Activated CD8-positive, alpha-beta memory T cell treated with anti-CD3 and anti-CD28 coated beads, Interleukin-2, amount 10 ng/mL, durations not matched to agents 7 days and 5 days (primary cell): ENCODE measurements at regions of chr5 and their contacts with region 1.

Region 1: DNA sequence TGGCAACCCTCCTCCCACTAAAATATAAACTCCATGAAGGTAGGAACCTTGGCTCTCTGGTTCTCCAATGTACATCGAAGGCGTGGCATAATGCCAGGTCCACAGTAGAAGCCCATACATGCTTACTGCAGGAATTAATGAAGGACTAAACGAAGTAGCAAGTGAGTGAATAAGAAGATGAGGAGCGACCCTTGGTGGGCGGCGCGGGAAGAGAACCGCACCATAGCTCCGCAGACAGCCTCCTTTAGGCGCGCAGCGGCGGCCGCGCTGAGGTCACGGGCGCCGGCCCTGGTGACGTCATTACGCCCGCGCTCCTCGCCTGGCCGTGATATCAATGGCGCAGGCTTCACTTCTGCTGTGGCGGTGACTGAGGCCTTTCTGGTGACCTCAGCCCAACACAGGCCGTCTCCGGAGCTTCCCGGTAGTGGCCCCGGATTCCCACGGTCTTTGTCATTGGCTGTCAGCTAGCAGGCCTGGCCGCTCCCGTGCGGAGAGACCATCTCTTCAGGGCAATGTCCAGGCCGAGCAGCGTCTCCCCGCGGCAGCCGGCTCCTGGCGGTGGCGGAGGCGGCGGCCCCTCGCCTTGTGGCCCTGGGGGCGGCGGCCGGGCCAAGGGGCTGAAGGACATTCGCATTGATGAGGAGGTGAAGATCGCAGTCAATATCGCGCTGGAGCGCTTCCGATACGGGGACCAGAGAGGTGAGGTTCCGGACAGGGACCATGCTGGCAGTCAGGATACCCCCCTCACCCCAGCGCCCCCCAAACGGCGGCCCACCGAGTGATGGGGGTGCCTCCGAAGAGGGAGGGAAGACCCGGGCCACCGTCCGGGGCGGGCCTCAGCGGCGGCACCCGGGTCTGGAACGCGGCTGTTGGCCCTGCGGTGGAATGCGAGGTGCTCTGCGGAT is at the start of gene YTHDC2:
- DNase-seq: peak; percentile 91
- ATAC-seq: peak; percentile 97
- H3K4me3 Mint-ChIP-seq: peak within 1 kb of the TSS; percentile 85
- H3K27ac Mint-ChIP-seq: peak within 1 kb of the TSS; percentile 84
- H3K4me1 Mint-ChIP-seq: peaks cover 32% of the 10 kb centered on the region
- H3K27me3 Mint-ChIP-seq: peaks cover 22% of the 10 kb centered on the region
- total RNA-seq, gene YTHDC2: 27.6 to 32.8 TPM

Region 2: DNA sequence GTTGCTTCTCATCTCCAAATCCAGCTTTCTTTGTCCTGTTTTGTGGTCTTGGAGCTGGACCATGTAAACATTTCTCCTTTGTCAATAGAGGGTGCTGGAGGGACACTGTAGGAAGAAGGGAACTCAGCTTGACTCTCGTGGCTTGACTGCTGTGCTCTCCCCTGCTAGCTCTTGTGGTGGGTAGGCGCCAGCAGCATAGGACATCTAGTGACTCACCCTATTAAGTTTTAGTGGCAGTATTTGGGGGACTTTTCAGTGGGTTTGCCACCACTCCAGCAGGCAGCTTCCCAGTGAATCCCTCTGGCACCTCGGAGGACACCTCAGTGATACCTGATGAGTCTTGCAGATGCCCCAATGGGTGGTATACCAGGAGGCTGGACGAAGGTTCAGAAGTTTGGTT is 176.7 kb before region 1 on chr5:
- CTCF ChIA-PET with region 1: interaction called, 42 read pairs
- DNase-seq: peak; percentile 45
- ATAC-seq: peak; percentile 72
- H3K4me3 Mint-ChIP-seq: no peak overlapping the region
- H3K27ac Mint-ChIP-seq: no peak overlapping the region
- H3K4me1 Mint-ChIP-seq: peaks cover 11% of the 10 kb centered on the region
- H3K27me3 Mint-ChIP-seq: peaks cover 7% of the 10 kb centered on the region

Region 3: DNA sequence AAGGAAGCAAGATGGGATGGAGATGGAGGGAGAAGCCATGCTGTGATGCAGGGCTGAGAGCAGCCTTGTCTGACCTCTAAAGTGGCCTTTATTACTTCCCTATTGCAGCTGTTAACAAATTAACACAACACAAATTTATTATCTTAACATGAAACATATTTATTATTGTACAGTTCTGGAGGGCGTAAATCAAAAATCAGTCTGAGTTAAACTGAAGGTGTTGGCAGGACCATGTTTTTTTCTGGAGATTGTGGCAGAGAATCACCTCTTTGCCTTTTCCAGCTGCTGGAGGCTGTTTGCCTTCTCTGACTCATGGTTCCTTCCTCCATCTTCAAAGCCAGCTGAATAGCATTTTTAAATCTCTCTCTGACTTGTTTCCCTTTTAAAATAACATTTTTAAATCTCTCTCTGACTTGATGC is 18.2 kb before region 1 on chr5:
- CTCF ChIA-PET with region 1: no interaction called
- DNase-seq: no peak
- ATAC-seq: no peak
- H3K4me3 Mint-ChIP-seq: no peak overlapping the region
- H3K27ac Mint-ChIP-seq: no peak overlapping the region
- H3K4me1 Mint-ChIP-seq: no peaks in the 10 kb centered on the region
- H3K27me3 Mint-ChIP-seq: peaks cover 74% of the 10 kb centered on the region